ENCODE measurements at regions of chr12 and their contacts with region 1.

Region 1: DNA sequence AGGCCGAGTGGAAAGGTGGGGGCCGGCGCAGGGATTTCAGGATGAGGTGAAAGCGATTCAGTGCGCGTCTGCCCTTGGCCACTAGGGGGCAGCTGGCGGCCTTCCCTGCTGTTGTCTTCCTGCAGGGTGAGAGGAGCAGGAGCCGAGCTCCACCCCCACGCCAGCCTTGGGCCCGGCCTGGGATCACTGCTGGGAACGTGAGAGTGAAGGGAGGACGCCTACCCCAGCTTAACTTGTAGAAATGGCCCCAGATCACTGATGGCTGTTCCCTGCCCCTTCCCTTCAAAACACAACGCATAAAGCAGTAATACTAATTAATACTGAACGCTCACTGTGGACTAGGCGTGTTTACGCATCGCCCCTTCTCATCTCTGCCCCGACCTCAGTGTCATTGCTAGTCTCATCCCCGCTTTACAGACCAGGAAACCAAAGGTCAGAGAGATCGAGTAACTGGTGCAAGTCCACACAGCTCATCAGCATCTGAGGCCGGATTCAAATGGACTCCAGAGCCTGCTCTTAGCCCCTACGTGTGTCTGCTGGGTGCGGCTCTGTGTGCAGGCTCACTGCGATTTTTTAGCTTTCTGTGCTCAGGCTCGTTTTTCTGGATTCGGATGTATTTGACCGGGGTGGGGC is 24.3 kb downstream of the MVK start:
- DNase-seq: peak; percentile 69
- ATAC-seq: peak; percentile 71
- H3K4me3 Mint-ChIP-seq: no peak overlapping the region
- H3K27ac Mint-ChIP-seq: no peak overlapping the region
- H3K4me1 Mint-ChIP-seq: peaks cover 24% of the 10 kb centered on the region
- H3K27me3 Mint-ChIP-seq: no peaks in the 10 kb centered on the region
- CTCF ChIP-seq: peak; percentile 91

Region 2: GRCh38 chr12:109573029-109573913 is 24.6 kb before region 1 on chr12 and contains the starts of genes MMAB and MVK:
- CTCF ChIA-PET with region 1: interaction called, 39 read pairs
- POLR2A ChIA-PET with region 1: interaction called, 6 read pairs
- intact Hi-C with region 1: no loop called
- DNase-seq: peak; percentile 100
- ATAC-seq: peak; percentile 98
- H3K4me3 Mint-ChIP-seq: peak within 1 kb of the TSS; percentile 96
- H3K27ac Mint-ChIP-seq: peak within 1 kb of the TSS; percentile 97
- H3K4me1 Mint-ChIP-seq: peaks cover 28% of the 10 kb centered on the region
- H3K27me3 Mint-ChIP-seq: no peaks in the 10 kb centered on the region
- CTCF ChIP-seq: no peak
- total RNA-seq, gene MMAB: 60.5 to 60.9 TPM
- total RNA-seq, gene MVK: 16.2 to 19.8 TPM

Region 3: DNA sequence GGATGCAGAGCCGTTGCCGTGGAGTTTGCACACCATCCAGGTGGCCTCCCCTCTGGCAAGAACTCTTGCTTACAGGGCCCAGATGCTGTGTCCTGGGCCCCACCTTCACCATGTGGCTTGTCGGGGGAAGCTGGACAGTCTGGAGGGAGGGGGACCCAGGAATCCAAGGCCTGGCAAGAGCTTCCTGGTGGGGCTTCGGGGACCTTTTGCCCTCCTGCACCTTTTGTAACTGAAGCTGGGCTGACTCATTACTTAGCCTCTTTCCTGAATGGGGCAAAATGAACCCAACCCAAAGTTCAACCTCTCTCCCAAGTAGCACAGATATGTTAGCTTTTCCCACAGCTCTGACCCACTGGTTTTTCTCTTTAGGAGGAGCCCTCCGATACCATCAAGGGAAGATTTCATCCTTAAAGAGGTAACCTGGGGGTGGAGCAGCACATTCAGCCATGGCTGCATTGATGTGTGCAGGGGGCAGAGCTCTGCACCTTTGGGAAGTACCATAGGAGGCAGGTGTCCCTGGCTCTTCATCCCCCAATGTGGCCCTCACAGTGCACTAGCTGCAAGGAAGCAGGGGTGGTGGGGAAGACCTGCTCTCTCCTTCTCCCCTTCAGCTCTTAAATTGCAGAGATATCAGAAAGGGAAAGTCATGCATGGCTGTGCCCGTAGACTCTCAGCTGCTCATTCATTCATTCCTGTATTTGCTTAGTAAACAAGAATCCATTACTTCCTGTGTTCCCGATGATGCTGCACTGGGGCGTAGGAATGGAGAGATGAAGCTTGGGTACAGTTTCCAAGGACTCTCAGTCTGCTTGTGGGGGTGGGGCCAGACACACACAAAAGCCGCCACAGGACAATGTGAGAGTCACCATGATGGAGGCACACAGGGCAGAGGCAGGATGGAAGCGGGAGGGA is 11.3 kb before region 1 on chr12:
- CTCF ChIA-PET with region 1: interaction called, 19 read pairs
- POLR2A ChIA-PET with region 1: no interaction called
- intact Hi-C with region 1: no loop called
- DNase-seq: no peak
- ATAC-seq: no peak
- H3K4me3 Mint-ChIP-seq: no peak overlapping the region
- H3K27ac Mint-ChIP-seq: no peak overlapping the region
- H3K4me1 Mint-ChIP-seq: no peaks in the 10 kb centered on the region
- H3K27me3 Mint-ChIP-seq: no peaks in the 10 kb centered on the region
- CTCF ChIP-seq: no peak

Region 4: GRCh38 chr12:109612975-109613502 is 15.1 kb after region 1 on chr12:
- CTCF ChIA-PET with region 1: interaction called, 18 read pairs
- POLR2A ChIA-PET with region 1: no interaction called
- intact Hi-C with region 1: no loop called
- DNase-seq: peak; percentile 12
- ATAC-seq: no peak
- H3K4me3 Mint-ChIP-seq: no peak overlapping the region
- H3K27ac Mint-ChIP-seq: no peak overlapping the region
- H3K4me1 Mint-ChIP-seq: no peaks in the 10 kb centered on the region
- H3K27me3 Mint-ChIP-seq: peaks cover 8% of the 10 kb centered on the region
- CTCF ChIP-seq: peak; percentile 14

Region 5: GRCh38 chr12:109713187-109713984 is 115.5 kb after region 1 on chr12 and contains the start of gene FAM222A:
- CTCF ChIA-PET with region 1: interaction called, 17 read pairs
- POLR2A ChIA-PET with region 1: interaction called, 3 read pairs
- intact Hi-C with region 1: no loop called
- DNase-seq: peak; percentile 95
- ATAC-seq: peak; percentile 92
- H3K4me3 Mint-ChIP-seq: peak within 1 kb of the TSS; percentile 65
- H3K27ac Mint-ChIP-seq: no peak within 1 kb of the TSS
- H3K4me1 Mint-ChIP-seq: peaks cover 2% of the 10 kb centered on the region
- H3K27me3 Mint-ChIP-seq: peaks cover 27% of the 10 kb centered on the region
- CTCF ChIP-seq: peak; percentile 27
- total RNA-seq, gene FAM222A: 0.76 to 1.0 TPM

Region 6: DNA sequence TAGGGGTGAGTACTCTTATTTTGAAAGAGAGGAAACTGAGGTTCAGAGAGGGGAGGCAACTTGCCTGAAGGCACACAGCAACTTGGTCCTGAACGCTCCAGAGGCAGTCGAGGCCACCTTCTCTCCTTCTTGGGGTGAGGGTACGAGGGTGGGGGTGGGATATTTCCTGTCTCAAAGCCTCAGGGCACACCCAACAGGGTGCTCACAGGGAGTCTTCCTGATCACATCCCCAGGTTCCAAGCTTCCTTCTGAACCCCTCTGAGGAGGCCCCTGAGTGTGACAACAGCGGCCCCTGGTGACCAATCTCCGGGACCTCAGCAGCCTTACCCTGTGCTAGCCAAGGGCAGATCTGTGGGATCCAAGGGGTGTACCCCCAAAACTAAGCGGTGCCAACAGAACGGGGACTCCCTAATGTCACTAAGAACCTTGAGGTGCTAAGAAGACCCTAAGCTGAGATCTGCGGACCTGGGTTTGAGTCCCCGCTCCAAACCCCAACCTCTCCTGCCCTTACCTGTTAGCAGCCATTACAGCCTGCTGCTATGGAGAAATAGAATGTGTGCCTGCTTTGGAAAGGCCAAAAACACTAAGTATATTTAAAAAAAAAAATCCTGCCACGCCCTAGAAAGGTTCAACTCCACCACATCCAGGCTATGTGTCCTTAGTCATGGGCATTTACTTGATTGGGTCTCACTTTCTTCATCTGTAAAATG is 177.4 kb after region 1 on chr12:
- CTCF ChIA-PET with region 1: interaction called, 59 read pairs
- POLR2A ChIA-PET with region 1: interaction called, 4 read pairs
- intact Hi-C with region 1: loop called (anchors 5 kb)
- DNase-seq: peak; percentile 83
- ATAC-seq: peak; percentile 80
- H3K4me3 Mint-ChIP-seq: no peak overlapping the region
- H3K27ac Mint-ChIP-seq: no peak overlapping the region
- H3K4me1 Mint-ChIP-seq: peaks cover 5% of the 10 kb centered on the region
- H3K27me3 Mint-ChIP-seq: no peaks in the 10 kb centered on the region
- CTCF ChIP-seq: peak; percentile 78